Esophagus muscularis mucosa (tissue), 4 donors: ENCODE measurements at regions of chr9 and their contacts with region 1.

Region 1: DNA sequence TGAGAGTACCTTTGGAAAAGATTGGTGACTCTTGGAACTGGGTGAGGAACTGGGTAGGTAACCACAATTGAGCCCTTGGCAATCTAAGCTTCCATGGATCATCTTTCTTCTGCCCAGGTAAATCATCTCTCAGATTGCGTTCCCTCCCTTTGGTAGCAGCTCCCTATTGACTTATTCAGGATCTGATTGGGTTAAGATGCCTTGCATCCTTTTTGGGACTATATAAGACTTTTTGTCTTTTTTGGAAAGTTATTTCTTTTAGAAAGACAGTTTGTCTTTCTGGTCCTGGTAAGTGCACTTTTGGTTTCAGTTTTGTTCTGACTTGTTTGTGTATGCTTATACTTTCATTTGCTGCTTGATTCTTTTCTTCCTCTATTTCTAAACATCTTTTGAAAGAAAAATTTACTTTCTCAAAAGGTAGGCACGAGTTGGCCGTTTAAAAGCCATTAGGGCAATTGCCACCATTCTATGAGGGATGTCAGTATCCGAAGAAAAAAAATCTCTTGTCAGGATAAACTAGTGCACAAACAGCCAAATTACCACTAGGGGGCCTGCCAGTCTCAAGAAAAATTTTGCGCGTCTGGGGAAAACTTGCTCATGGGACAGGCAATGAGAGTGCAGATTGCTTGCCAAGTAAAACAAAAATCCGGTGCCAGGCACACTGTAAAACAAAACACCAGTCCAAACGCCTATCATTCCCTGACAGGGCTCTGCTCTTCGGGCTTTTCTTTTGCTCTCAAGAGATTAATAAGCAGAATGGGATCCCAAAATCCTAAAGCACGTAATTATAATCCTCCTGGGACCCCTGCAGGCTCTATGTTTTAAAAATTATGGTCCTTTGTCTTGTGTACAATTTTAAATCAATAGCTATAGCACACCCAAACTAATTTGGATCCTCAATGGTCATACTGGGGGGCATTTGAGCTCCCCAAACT is 12.8 kb downstream of the OR1J1 start:
- DNase-seq: no peak
- H3K4me3 ChIP-seq: peak overlapping the region; percentile 39 to 56 (median 44)
- H3K27ac ChIP-seq: peak overlapping the region in 2 of 4 donors; percentile 5 to 26
- H3K4me1 ChIP-seq: peaks cover 7 to 17% (median 13%) of the 10 kb centered on the region in 4 donors
- H3K27me3 ChIP-seq: no peaks in the 10 kb centered on the region
- CTCF ChIP-seq: peak; percentile 83 to 85 (median 85)
- EP300 ChIP-seq: no peak
- POLR2A ChIP-seq: no peak

Region 2: DNA sequence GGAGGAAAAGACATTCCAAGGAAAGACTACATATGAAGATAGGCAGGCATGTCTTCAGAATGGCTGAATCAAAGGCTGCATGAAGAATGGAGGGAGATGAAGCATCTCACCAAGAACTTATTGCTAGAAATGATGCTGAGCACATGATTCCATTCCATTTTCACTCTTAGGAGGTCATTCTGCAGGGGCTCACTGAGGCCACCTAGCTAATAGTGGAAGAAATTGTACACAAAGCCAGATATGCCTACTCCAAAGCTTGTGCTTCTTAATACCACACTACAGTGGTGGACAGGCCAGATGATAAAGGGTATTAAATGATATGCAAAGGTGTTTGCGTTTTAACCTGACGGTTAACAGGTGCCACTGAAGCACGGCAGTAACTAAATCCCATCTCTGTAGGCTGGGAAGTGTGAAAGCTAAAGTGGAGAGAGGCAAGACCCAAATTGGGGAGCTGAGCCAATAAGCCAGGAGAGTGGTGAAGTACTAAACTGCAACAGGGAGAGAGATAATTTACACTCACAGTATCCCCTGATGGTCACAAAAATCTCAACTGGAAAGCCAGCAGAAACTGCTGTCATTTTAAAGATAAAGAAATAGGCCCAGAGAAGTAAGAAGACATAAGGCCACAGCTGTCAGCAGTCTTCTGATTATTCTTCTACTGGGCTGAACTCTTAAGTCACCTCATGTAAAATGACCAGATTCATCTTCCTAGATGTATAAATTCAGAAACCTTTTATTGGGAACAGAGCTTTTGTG is 319.9 kb before region 1 on chr9:
- intact Hi-C with region 1: no loop called
- DNase-seq: no peak
- H3K4me3 ChIP-seq: no peak overlapping the region
- H3K27ac ChIP-seq: no peak overlapping the region
- H3K4me1 ChIP-seq: peaks cover 0 to 22% (median 7%) of the 10 kb centered on the region in 4 donors
- H3K27me3 ChIP-seq: no peaks in the 10 kb centered on the region
- CTCF ChIP-seq: peak in 2 of 3 experiments; percentile 10 to 35
- EP300 ChIP-seq: no peak
- POLR2A ChIP-seq: no peak

Region 3: GRCh38 chr9:122218935-122219855 is 245.7 kb before region 1 on chr9:
- intact Hi-C with region 1: no loop called
- DNase-seq: no peak
- H3K4me3 ChIP-seq: peak overlapping the region; percentile 13 to 37 (median 32)
- H3K27ac ChIP-seq: no peak overlapping the region
- H3K4me1 ChIP-seq: peaks cover 26 to 43% (median 37%) of the 10 kb centered on the region in 4 donors
- H3K27me3 ChIP-seq: peaks cover 0 to 100% (median 76%) of the 10 kb centered on the region in 4 donors
- CTCF ChIP-seq: no peak
- EP300 ChIP-seq: no peak
- POLR2A ChIP-seq: no peak

Region 4: GRCh38 chr9:122402403-122402871 is 62.5 kb before region 1 on chr9:
- intact Hi-C with region 1: no loop called
- DNase-seq: peak; percentile 90
- H3K4me3 ChIP-seq: no peak overlapping the region
- H3K27ac ChIP-seq: no peak overlapping the region
- H3K4me1 ChIP-seq: peaks cover 0 to 6% (median 5%) of the 10 kb centered on the region in 4 donors
- H3K27me3 ChIP-seq: no peaks in the 10 kb centered on the region
- CTCF ChIP-seq: no peak
- EP300 ChIP-seq: no peak
- POLR2A ChIP-seq: no peak

Region 5: GRCh38 chr9:122810306-122810946 is 345.5 kb after region 1 on chr9:
- intact Hi-C with region 1: loop called (anchors 2 kb)
- DNase-seq: no peak
- H3K4me3 ChIP-seq: no peak overlapping the region
- H3K27ac ChIP-seq: no peak overlapping the region
- H3K4me1 ChIP-seq: peaks cover 0 to 7% (median 2%) of the 10 kb centered on the region in 4 donors
- H3K27me3 ChIP-seq: no peaks in the 10 kb centered on the region
- CTCF ChIP-seq: peak; percentile 76 to 84 (median 78)
- EP300 ChIP-seq: no peak
- POLR2A ChIP-seq: no peak